Mammary epithelial cell (primary cell): ENCODE measurements at regions of chr16 and their contacts with region 1.

Region 1: DNA sequence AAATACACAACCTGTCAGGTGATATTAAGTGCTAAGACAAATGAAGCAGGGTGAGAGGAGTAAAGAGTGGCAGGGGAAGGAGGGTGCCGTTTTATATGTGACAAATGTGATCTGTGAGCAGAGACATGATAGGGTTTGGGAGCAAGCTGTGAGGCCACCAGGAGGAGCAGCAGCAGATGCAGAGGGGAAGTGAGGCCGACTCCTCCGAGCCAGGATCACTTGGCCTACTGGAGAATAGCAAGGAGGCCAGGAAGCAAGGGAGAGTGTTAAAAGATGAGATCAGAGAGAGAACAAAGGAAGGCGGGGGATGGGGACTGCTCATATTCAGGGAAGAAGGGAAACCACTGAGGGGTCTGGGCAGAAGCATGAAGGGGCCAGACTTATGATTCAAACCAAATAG is 129.4 kb downstream of the TANGO6 start:
- DNase-seq: peak; percentile 28
- H3K4me3 ChIP-seq: no peak overlapping the region
- H3K27ac ChIP-seq: no peak overlapping the region
- H3K4me1 ChIP-seq: peaks cover 5% of the 10 kb centered on the region
- H3K27me3 ChIP-seq: no peaks in the 10 kb centered on the region
- CTCF ChIP-seq: peak; percentile 29 to 59

Region 2: GRCh38 chr16:68985855-68986254 is 13.1 kb after region 1 on chr16:
- CTCF ChIA-PET with region 1: interaction called, 10 read pairs
- dilution Hi-C with region 1: no loop called
- in situ Hi-C with region 1: no loop called
- intact Hi-C with region 1: no loop called
- DNase-seq: peak; percentile 95
- H3K4me3 ChIP-seq: no peak overlapping the region
- H3K27ac ChIP-seq: peak overlapping the region; percentile 94
- H3K4me1 ChIP-seq: peaks cover 33% of the 10 kb centered on the region
- H3K27me3 ChIP-seq: no peaks in the 10 kb centered on the region
- CTCF ChIP-seq: no peak